CD8-positive, alpha-beta memory T cell (primary cell): ENCODE measurements at regions of chr15 and their contacts with region 1.

Region 1: DNA sequence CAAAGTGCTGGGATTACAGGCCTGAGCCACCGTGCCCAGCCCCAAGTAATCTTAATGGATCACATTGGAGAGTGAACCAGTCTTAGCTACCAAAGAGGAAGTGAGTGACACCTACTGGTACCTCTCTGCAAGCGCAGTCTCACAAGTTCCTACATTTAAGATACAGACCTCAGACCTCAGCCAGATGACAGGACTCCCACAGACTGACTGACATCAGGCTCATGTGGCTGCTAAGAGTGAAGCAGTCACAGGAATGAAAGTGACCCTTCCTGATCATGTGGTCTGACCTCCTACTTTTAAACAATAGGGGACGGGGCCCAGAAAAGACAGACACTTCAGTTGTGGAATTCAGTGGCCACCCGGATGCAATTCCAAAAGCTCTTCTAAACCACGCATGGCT is 36.3 kb upstream of the GNB5 start:
- DNase-seq: peak; percentile 41 to 79 (median 59)
- H3K4me3 ChIP-seq: no peak overlapping the region
- H3K4me3 Mint-ChIP-seq: no peak overlapping the region
- H3K27ac ChIP-seq: no peak overlapping the region
- H3K27ac Mint-ChIP-seq: peak overlapping the region in 2 of 8 donors; percentile 13 to 55
- H3K4me1 ChIP-seq: peaks cover 3% of the 10 kb centered on the region
- H3K4me1 Mint-ChIP-seq: peaks cover 4 to 19% (median 16%) of the 10 kb centered on the region in 3 donors
- H3K27me3 ChIP-seq: no peaks in the 10 kb centered on the region
- H3K27me3 Mint-ChIP-seq: no peaks in the 10 kb centered on the region

Region 2: GRCh38 chr15:52163321-52164190 is 63.9 kb before region 1 on chr15:
- CTCF ChIA-PET with region 1: interaction called, 13 read pairs
- POLR2A ChIA-PET with region 1: no interaction called
- DNase-seq: peak in 1 of 5 donors; percentile 21
- H3K4me3 ChIP-seq: no peak overlapping the region
- H3K4me3 Mint-ChIP-seq: no peak overlapping the region
- H3K27ac ChIP-seq: no peak overlapping the region
- H3K27ac Mint-ChIP-seq: no peak overlapping the region
- H3K4me1 ChIP-seq: peaks cover 7% of the 10 kb centered on the region
- H3K4me1 Mint-ChIP-seq: peaks cover 35 to 49% (median 45%) of the 10 kb centered on the region in 3 donors
- H3K27me3 ChIP-seq: no peaks in the 10 kb centered on the region
- H3K27me3 Mint-ChIP-seq: no peaks in the 10 kb centered on the region

Region 3: GRCh38 chr15:52179278-52180195 is 47.9 kb before region 1 on chr15:
- CTCF ChIA-PET with region 1: interaction called, 26 read pairs
- POLR2A ChIA-PET with region 1: interaction called, 8 read pairs
- DNase-seq: peak; percentile 78 to 92 (median 88)
- H3K4me3 ChIP-seq: peak overlapping the region; percentile 66
- H3K4me3 Mint-ChIP-seq: peak overlapping the region; percentile 91 to 98 (median 92)
- H3K27ac ChIP-seq: peak overlapping the region; percentile 99
- H3K27ac Mint-ChIP-seq: peak overlapping the region; percentile 91 to 100 (median 98)
- H3K4me1 ChIP-seq: peaks cover 20% of the 10 kb centered on the region
- H3K4me1 Mint-ChIP-seq: peaks cover 33 to 54% (median 43%) of the 10 kb centered on the region in 3 donors
- H3K27me3 ChIP-seq: no peaks in the 10 kb centered on the region
- H3K27me3 Mint-ChIP-seq: no peaks in the 10 kb centered on the region

Region 4: DNA sequence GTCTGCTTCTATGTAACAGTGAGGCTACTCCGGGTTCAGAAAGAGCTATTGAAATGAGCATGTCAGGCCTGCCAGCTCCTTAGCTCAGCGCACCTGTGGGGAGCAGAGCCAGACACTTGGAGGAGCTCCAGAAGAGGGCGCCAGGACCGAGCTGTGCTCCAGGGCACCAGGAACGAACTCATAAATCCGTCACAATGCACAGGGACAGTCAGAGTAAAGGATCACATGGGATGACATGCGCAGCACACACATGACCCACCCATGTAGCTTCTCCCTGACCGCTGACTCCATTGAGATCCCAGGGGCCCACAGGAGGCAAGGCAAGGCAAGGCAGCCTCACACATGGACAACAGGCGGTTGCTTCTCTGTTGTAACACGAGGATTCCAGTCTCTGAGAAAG is 10.3 kb before region 1 on chr15:
- CTCF ChIA-PET with region 1: interaction called, 13 read pairs
- POLR2A ChIA-PET with region 1: interaction called, 4 read pairs
- DNase-seq: no peak
- H3K4me3 ChIP-seq: no peak overlapping the region
- H3K4me3 Mint-ChIP-seq: no peak overlapping the region
- H3K27ac ChIP-seq: no peak overlapping the region
- H3K27ac Mint-ChIP-seq: peak overlapping the region in 1 of 8 donors; percentile 86
- H3K4me1 ChIP-seq: peaks cover 20% of the 10 kb centered on the region
- H3K4me1 Mint-ChIP-seq: peaks cover 15 to 24% (median 16%) of the 10 kb centered on the region in 3 donors
- H3K27me3 ChIP-seq: no peaks in the 10 kb centered on the region
- H3K27me3 Mint-ChIP-seq: no peaks in the 10 kb centered on the region

Region 5: GRCh38 chr15:52240166-52240565 is 12.7 kb after region 1 on chr15:
- CTCF ChIA-PET with region 1: interaction called, 14 read pairs
- POLR2A ChIA-PET with region 1: no interaction called
- DNase-seq: no peak
- H3K4me3 ChIP-seq: no peak overlapping the region
- H3K4me3 Mint-ChIP-seq: no peak overlapping the region
- H3K27ac ChIP-seq: no peak overlapping the region
- H3K27ac Mint-ChIP-seq: no peak overlapping the region
- H3K4me1 ChIP-seq: peaks cover 18% of the 10 kb centered on the region
- H3K4me1 Mint-ChIP-seq: peaks cover 7 to 16% (median 13%) of the 10 kb centered on the region in 3 donors
- H3K27me3 ChIP-seq: no peaks in the 10 kb centered on the region
- H3K27me3 Mint-ChIP-seq: peaks cover 0 to 4% of the 10 kb centered on the region in 2 donors

Region 6: DNA sequence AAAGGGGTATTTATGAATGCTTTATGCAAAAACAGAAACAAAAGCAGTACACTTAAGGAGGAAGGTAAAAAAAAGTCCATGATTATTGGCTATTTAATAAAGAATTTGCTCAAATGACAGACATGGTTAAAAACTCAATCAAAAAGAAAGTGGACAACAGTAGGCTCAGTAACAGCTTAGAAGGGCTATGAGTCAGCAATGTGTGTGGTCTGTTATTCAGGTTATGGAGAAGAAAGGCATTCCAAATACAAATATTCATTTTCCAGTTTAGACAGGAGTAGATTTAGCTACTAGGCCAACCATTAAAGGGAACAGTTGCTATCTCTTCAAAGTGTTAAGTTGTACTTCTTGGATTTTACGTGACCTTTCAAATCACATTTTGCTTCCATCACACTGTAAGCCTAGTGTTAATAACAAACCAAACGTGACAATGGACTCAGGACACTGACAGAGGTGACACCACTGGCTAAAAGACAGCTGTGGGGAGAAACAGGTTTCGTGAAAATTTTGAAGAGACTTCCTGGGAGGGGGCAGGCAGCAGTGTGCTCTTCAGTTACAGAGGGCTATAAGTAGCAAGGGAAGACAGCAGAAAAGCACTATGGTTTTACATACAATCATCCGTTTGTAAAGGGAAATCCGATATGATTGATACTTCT is 109.9 kb after region 1 on chr15:
- CTCF ChIA-PET with region 1: no interaction called
- POLR2A ChIA-PET with region 1: no interaction called
- DNase-seq: no peak
- H3K4me3 ChIP-seq: no peak overlapping the region
- H3K4me3 Mint-ChIP-seq: no peak overlapping the region
- H3K27ac ChIP-seq: no peak overlapping the region
- H3K27ac Mint-ChIP-seq: peak overlapping the region; percentile 1 to 83 (median 50)
- H3K4me1 ChIP-seq: no peaks in the 10 kb centered on the region
- H3K4me1 Mint-ChIP-seq: peaks cover 2 to 5% (median 4%) of the 10 kb centered on the region in 3 donors
- H3K27me3 ChIP-seq: no peaks in the 10 kb centered on the region
- H3K27me3 Mint-ChIP-seq: no peaks in the 10 kb centered on the region